Activated T-helper 2 cell treated with anti-CD3 and anti-CD28 coated beads, Interferon-gamma antibody, Interleukin-2, Interleukin-4, amounts not matched to agents 10 μg/mL and 5 μg/mL and 100 μg/mL, durations not matched to agents 14 hours and 24 hours and 36 hours (primary cell): ENCODE measurements at regions of chrX and their contacts with region 1.

Region 1: DNA sequence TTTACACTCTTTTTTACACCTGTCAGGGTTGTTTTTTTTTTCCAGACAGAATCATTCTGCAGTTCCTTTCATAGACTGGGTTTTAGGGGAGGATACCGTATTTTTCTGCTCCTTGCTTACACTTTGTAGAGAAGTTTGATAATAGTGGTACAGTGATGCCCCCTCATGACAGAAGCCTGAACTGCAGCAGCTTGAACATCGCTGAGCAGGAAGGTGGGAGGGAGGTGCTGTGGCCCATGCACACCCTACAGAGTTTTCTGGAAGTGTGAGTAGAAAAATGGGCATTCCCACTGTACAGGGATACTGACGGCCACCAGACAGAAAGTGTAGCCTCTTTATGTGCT is 54.5 kb downstream of the RAB40A start:
- DNase-seq: peak; percentile 56
- H3K4me3 Mint-ChIP-seq: peak overlapping the region; percentile 86
- H3K27ac Mint-ChIP-seq: peak overlapping the region; percentile 63
- H3K4me1 Mint-ChIP-seq: peaks cover 3% of the 10 kb centered on the region
- H3K27me3 Mint-ChIP-seq: peaks cover 6% of the 10 kb centered on the region

Region 2: GRCh38 chrX:103343105-103343504 is 121.6 kb before region 1 on chrX:
- intact Hi-C with region 1: loop called (anchors 1 kb)
- DNase-seq: no peak
- H3K4me3 Mint-ChIP-seq: no peak overlapping the region
- H3K27ac Mint-ChIP-seq: no peak overlapping the region
- H3K4me1 Mint-ChIP-seq: no peaks in the 10 kb centered on the region
- H3K27me3 Mint-ChIP-seq: peaks cover 2% of the 10 kb centered on the region

Region 3: GRCh38 chrX:103520386-103520785 is 55.6 kb after region 1 on chrX:
- intact Hi-C with region 1: no loop called
- DNase-seq: no peak
- H3K4me3 Mint-ChIP-seq: no peak overlapping the region
- H3K27ac Mint-ChIP-seq: no peak overlapping the region
- H3K4me1 Mint-ChIP-seq: no peaks in the 10 kb centered on the region
- H3K27me3 Mint-ChIP-seq: no peaks in the 10 kb centered on the region

Region 4: DNA sequence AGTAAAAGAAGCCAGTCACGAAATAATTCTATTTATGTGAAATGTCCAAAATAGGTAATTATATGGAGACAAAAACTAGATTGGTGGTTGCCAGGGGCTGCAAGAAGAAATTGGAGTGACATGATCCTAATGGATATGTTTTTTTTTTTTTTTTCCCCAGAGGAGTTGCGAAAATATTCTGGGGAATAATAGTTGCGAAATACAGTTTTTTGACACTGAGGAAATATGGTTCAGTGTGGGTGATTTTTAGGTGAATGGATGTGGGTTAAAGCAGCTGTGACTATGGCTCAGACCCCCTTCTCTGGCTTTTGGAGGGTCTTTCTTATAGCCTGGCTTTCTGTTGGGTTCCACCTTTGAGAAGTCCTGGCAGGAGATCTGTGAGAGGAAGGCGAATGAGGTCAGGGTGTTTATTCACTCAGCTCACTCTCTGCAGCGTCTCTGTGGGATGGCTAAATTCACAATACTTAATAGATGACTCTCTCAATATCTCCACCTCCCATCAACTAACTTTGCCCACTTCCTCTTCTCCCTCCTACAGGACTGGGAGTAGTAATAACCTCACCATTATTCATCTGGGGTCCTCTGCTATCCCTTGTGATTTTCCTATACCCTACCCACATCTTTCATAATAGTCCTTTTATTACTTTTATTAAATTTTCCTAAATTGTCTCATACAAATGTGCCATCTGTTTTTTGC is 382.6 kb after region 1 on chrX:
- intact Hi-C with region 1: no loop called
- DNase-seq: no peak
- H3K4me3 Mint-ChIP-seq: no peak overlapping the region
- H3K27ac Mint-ChIP-seq: no peak overlapping the region
- H3K4me1 Mint-ChIP-seq: peaks cover 3% of the 10 kb centered on the region
- H3K27me3 Mint-ChIP-seq: peaks cover 2% of the 10 kb centered on the region